ENCODE measurements at regions of chr13 and their contacts with region 1.

Region 1: GRCh38 chr13:80979035-80979641 is 638.2 kb upstream of the SPRY2 start:
- DNase-seq: peak; percentile 53
- H3K4me3 ChIP-seq: no peak overlapping the region
- H3K27ac ChIP-seq: no peak overlapping the region
- H3K4me1 ChIP-seq: no peaks in the 10 kb centered on the region
- CTCF ChIP-seq: peak; percentile 95

Region 2: DNA sequence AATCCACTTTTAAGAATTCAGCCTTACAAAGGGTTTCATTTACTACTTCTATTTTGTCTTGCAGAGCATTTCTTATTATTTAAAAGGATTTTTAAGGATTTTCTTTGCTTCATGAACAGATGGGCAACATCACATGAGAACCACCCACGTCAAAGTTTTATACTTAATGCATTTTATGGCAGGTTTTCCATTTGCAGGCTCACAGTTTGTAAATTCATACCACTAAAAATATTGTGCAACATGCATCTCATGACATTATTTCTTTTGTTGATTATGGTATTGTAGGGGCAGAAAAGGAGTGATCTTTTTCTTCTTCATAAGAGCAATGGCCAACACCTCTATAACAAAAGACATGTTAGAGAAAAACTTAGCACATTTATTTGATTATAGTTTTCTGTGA is 84.2 kb before region 1 on chr13:
- CTCF ChIA-PET with region 1: no interaction called
- POLR2A ChIA-PET with region 1: no interaction called
- intact Hi-C with region 1: no loop called
- DNase-seq: no peak
- H3K4me3 ChIP-seq: no peak overlapping the region
- H3K27ac ChIP-seq: no peak overlapping the region
- H3K4me1 ChIP-seq: no peaks in the 10 kb centered on the region
- CTCF ChIP-seq: no peak

Region 3: GRCh38 chr13:81017513-81018152 is 38.5 kb after region 1 on chr13:
- CTCF ChIA-PET with region 1: no interaction called
- POLR2A ChIA-PET with region 1: no interaction called
- intact Hi-C with region 1: loop called (anchors 5 kb)
- DNase-seq: peak; percentile 46
- H3K4me3 ChIP-seq: no peak overlapping the region
- H3K27ac ChIP-seq: no peak overlapping the region
- H3K4me1 ChIP-seq: no peaks in the 10 kb centered on the region
- CTCF ChIP-seq: peak; percentile 88

Measured in OCI-LY7 (cell line).